Activated CD4-positive, alpha-beta memory T cell treated with anti-CD3 and anti-CD28 coated beads, Interleukin-2, amount 10 ng/mL, durations not matched to agents 7 days and 5 days (primary cell): ENCODE measurements at regions of chr1 and their contacts with region 1.

Region 1: DNA sequence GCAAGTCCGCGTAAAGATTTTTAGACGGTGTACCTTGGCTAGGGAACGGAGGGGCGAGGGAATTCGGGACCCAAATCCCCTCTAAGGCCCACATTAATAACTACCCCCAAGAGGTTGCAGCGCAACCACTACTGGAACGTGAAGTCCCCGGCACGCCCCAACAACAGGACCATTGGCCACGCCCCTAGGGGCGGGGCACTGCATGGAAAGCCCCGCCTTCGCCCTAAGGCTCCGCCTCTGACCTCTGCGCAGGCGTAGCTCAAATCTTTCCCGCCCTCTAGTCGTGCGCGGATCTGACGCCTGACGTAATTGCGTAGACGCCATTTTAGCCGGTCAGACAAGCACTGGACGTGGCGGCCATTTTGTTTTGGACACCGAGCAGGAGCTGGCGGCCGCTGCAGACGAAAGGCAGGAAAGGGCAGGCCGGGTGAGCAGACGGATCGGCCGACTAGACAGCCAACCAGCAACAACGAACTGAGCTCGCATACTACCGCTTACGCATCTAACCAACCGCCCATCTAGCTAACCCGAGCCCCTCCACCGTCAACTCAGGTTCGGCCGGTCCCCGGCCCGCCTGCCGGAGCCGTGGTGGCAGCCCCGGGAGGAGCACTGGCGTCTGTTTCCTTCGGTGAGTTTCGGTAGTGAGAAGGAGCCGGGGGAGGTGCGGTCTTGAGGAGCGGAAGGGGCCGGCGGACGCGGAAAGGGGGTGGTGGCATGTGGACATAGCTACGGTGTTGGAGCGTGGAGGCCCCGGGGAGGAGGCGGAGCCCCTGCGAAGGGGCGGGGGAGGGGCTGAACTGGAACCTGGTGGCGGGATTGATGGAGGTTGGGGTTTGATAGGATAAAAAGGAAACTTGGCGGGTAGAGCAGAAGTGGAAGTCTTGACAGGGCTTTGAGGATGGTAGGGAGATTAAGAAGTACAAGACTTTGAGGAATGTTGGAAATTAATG is at the start of gene CHTOP:
- DNase-seq: peak; percentile 98
- H3K4me3 Mint-ChIP-seq: peak within 1 kb of the TSS; percentile 97
- H3K27ac Mint-ChIP-seq: peak within 1 kb of the TSS; percentile 100
- H3K4me1 Mint-ChIP-seq: peaks cover 48% of the 10 kb centered on the region
- H3K27me3 Mint-ChIP-seq: no peaks in the 10 kb centered on the region
- total RNA-seq, gene CHTOP: 84.7 to 87.1 TPM

Region 2: DNA sequence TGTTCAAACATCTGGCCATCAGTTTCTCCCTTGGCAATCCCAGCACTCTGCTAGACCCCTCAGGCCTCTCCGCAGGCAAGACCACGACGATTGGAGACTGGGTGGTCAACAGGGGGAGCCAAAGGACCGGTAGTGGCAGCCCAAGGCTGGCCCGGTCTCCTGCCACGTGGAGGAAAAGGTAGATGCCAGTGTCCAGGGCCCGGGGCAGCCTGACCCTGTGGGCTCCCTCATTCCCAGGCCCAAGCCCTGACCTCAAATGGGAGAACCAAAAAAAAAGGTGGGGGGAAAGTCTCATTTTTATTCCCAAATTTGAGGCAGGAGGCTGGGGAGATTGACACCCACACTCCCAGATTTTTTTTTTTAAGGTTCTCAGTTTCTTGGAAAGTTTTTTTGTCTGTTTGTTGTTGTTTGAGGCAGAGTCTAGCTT is 123.0 kb before region 1 on chr1:
- CTCF ChIA-PET with region 1: interaction called, 27 read pairs
- POLR2A ChIA-PET with region 1: interaction called, 7 read pairs
- DNase-seq: peak; percentile 80
- H3K4me3 Mint-ChIP-seq: no peak overlapping the region
- H3K27ac Mint-ChIP-seq: no peak overlapping the region
- H3K4me1 Mint-ChIP-seq: peaks cover 40% of the 10 kb centered on the region
- H3K27me3 Mint-ChIP-seq: no peaks in the 10 kb centered on the region

Region 3: GRCh38 chr1:153545067-153546055 is 88.6 kb before region 1 on chr1 and contains the start of gene S100A4:
- CTCF ChIA-PET with region 1: interaction called, 5 read pairs
- POLR2A ChIA-PET with region 1: interaction called, 33 read pairs
- DNase-seq: peak; percentile 97
- H3K4me3 Mint-ChIP-seq: peak within 1 kb of the TSS; percentile 96
- H3K27ac Mint-ChIP-seq: peak within 1 kb of the TSS; percentile 98
- H3K4me1 Mint-ChIP-seq: peaks cover 90% of the 10 kb centered on the region
- H3K27me3 Mint-ChIP-seq: peaks cover 3% of the 10 kb centered on the region
- total RNA-seq, gene S100A4: 1,297 to 1,322 TPM

Region 4: GRCh38 chr1:153617675-153618074 is 16.3 kb before region 1 on chr1:
- CTCF ChIA-PET with region 1: interaction called, 16 read pairs
- POLR2A ChIA-PET with region 1: interaction called, 5 read pairs
- DNase-seq: peak; percentile 75
- H3K4me3 Mint-ChIP-seq: no peak overlapping the region
- H3K27ac Mint-ChIP-seq: no peak overlapping the region
- H3K4me1 Mint-ChIP-seq: peaks cover 4% of the 10 kb centered on the region
- H3K27me3 Mint-ChIP-seq: no peaks in the 10 kb centered on the region

Region 5: DNA sequence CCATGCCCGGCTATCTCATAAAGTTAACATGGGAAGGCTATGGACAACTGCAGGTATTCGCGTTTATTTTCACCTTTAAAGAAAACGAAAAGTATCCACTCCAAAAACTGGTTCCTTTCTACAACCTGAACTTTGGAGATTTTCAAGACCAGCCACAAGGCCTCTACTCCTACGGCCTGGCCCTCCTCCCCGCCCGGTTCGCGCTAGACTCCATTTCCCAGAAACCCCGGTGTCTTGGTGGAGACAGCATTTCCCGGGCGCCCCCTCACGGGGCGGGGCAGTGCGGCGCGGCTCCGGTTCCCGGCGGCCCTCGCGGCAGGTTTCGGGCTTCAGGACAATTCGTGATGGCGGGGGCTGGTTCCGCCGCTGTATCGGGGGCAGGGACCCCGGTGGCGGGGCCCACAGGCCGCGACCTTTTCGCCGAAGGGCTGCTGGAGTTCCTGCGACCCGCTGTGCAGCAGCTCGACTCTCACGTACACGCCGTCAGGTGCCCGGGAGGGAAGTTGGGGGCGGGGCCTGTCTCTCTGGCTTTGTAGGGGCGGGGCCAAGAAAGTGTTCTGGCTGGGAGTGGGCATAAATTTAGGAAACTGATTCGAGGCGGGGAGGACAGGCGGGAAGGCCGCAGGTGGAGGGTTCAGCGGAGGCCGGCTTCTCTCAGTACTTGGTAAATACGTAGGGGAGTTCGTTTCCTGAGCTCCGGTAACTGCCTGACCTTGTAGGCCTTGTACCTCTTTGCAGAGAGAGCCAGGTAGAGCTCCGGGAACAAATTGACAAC is 24.6 kb after region 1 on chr1 and contains the start of gene SNAPIN:
- CTCF ChIA-PET with region 1: interaction called, 7 read pairs
- POLR2A ChIA-PET with region 1: interaction called, 32 read pairs
- DNase-seq: peak; percentile 93
- H3K4me3 Mint-ChIP-seq: peak within 1 kb of the TSS; percentile 95
- H3K27ac Mint-ChIP-seq: peak within 1 kb of the TSS; percentile 90
- H3K4me1 Mint-ChIP-seq: peaks cover 24% of the 10 kb centered on the region
- H3K27me3 Mint-ChIP-seq: no peaks in the 10 kb centered on the region
- total RNA-seq, gene SNAPIN: 35.0 to 35.6 TPM

Region 6: DNA sequence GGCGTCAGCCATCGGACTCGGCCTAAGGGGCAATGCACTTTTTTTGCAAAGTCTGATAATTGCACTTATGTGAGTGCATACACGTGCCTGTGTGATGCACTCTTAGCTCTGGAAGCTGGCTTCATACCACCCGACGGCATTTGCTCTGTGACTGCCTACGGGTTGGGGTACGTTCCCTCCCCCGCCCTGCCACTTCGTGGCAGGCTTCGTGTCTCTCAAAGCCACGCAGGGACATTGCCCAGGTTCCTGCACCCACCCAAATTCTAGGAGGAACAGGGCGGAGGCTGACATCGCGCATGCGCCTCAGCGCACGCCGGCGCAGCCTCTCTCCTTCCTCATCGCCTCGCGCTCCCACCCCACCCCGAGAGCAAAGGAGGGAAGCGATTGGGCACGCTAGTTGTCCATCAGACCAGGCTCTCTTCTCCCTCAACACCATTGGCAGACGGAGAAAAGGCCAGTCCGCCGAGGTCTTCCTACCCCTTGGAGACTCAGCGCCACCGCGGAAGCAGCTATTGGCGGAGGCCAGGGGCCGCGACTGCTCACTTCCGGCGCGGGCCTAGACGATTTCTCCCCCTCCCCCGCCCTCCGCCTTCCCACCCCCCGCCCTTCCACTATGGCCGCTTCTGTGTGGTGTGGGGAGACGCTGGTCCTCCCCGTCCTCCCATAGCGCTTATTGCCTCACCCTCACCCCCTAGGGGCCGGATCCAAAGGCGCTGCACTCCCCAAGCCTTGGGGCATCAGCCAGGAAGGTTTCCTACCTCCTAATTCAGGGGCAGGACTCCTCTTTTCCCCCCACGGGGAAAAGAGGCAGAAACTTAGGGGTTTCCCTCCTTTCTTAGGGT is 93.7 kb after region 1 on chr1 and contains the start of gene INTS3:
- CTCF ChIA-PET with region 1: no interaction called
- POLR2A ChIA-PET with region 1: interaction called, 14 read pairs
- DNase-seq: peak; percentile 100
- H3K4me3 Mint-ChIP-seq: peak within 1 kb of the TSS; percentile 90
- H3K27ac Mint-ChIP-seq: peak within 1 kb of the TSS; percentile 93
- H3K4me1 Mint-ChIP-seq: peaks cover 42% of the 10 kb centered on the region
- H3K27me3 Mint-ChIP-seq: no peaks in the 10 kb centered on the region
- total RNA-seq, gene INTS3: 46.9 to 50.5 TPM